Heart left ventricle (tissue), 16 donors: ENCODE measurements at regions of chr4 and their contacts with region 1.

Region 1: DNA sequence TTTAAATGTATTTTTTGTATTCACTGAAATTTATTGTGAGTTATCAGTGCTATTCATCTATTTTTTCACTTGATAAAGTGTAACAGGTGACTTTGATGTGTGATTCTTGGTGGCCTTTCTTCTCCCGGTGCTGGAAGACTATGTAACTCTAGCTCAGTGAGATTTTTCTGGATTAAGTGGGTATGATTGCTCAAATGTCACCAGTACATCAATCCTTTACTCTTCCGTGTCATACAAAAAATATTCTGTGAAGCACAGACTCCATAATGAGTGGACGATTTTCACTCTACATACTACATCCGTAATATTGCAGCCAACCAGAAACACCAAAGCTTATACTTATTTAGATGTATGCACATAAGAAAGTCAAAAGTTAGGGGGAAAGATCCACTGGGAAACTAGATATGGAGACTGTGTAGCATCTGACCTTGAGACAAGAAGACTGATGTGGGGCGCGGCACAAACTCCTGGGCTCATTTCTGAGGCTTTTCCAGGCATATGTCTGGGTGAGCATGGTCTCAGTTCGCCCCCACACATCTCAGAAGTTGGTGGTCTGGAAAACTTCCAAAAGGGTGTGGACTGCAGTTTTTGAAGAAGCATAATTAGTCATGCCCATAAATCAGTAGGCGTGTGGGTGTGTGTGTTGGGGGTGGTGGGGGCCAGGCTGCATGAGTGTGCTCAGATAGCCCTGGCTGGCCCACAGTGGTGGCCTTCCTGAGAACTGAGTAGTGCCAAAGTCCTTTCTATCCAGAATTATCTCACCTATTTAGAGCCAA is 53.9 kb upstream of the TENM3 start:
- DNase-seq: no peak
- ATAC-seq: no peak
- H3K4me3 ChIP-seq: no peak overlapping the region
- H3K27ac ChIP-seq: no peak overlapping the region
- H3K4me1 ChIP-seq: no peaks in the 10 kb centered on the region
- H3K27me3 ChIP-seq: no peaks in the 10 kb centered on the region
- CTCF ChIP-seq: no peak
- POLR2A ChIP-seq: no peak

Region 2: DNA sequence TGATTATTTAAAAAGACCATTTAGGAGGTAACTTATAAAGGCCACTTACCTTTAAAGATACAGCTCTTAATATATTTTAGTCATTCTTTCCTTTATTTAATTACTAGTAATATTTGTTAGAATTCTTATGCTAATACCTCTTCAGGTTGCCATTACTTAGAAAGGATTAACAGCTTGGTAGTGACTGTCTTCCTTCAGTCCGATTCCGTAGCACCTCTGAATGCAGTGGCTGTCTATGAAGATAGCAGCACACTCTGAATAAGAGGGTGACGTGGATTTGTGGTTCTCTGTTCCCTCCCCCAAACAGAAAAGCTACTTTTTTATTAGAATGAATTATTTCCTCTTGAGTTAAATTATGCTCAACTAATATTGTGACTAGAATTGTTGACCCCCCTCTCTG is 38.6 kb before region 1 on chr4:
- intact Hi-C with region 1: loop called in 1 of 10 experiments (anchors 5 kb)
- DNase-seq: no peak
- ATAC-seq: no peak
- H3K4me3 ChIP-seq: no peak overlapping the region
- H3K27ac ChIP-seq: no peak overlapping the region
- H3K4me1 ChIP-seq: no peaks in the 10 kb centered on the region
- H3K27me3 ChIP-seq: peaks cover 0 to 63% (median 27%) of the 10 kb centered on the region in 9 donors
- CTCF ChIP-seq: no peak
- POLR2A ChIP-seq: no peak